ENCODE measurements at regions of chr22 and their contacts with region 1.

Region 1: GRCh38 chr22:19970479-19971275 is 29.1 kb upstream of the TXNRD2 start:
- DNase-seq: peak; percentile 96 to 99 (median 98)
- ATAC-seq: peak; percentile 78
- H3K4me3 ChIP-seq: no peak overlapping the region
- H3K27ac ChIP-seq: no peak overlapping the region
- H3K4me1 ChIP-seq: peaks cover 18 to 79% of the 10 kb centered on the region in 2 experiments
- H3K27me3 ChIP-seq: no peaks in the 10 kb centered on the region
- CTCF ChIP-seq: peak; percentile 98 to 100 (median 99)
- EP300 ChIP-seq: peak; percentile 28; the same call in 1 of the 2 replicates
- POLR2A ChIP-seq: peak; percentile 59
- RAD21 ChIP-seq: peak; percentile 100

Region 2: GRCh38 chr22:19854778-19855503 is 115.7 kb before region 1 on chr22 and contains the starts of genes GNB1L and RTL10:
- CTCF ChIA-PET with region 1: no interaction called
- POLR2A ChIA-PET with region 1: no interaction called
- in situ Hi-C with region 1: no loop called
- intact Hi-C with region 1: no loop called
- DNase-seq: peak; percentile 100
- ATAC-seq: peak; percentile 92
- H3K4me3 ChIP-seq: peak within 1 kb of the TSS; percentile 62
- H3K27ac ChIP-seq: peak within 1 kb of the TSS; percentile 84
- H3K4me1 ChIP-seq: peaks cover 23 to 63% of the 10 kb centered on the region in 2 experiments
- H3K27me3 ChIP-seq: no peaks in the 10 kb centered on the region
- CTCF ChIP-seq: peak; percentile 29 to 50 (median 49); a peak in 5 of 6 replicates
- EP300 ChIP-seq: peak; percentile 57
- POLR2A ChIP-seq: no peak
- RAD21 ChIP-seq: 0 out of 4 replicates have a peak, but pooled peaks of 1 of the 2 experiments have one; percentile 46
- polyA plus RNA-seq, gene GNB1L: 0.56 to 3.5 TPM
- polyA plus RNA-seq, gene RTL10: 23.6 to 33.7 TPM

Region 3: GRCh38 chr22:19986410-19987341 is 16.0 kb after region 1 on chr22:
- CTCF ChIA-PET with region 1: no interaction called
- POLR2A ChIA-PET with region 1: interaction called, 56 read pairs
- in situ Hi-C with region 1: no loop called
- intact Hi-C with region 1: no loop called
- DNase-seq: peak; percentile 97 to 100 (median 100)
- ATAC-seq: peak; percentile 94
- H3K4me3 ChIP-seq: peak overlapping the region; percentile 48
- H3K27ac ChIP-seq: peak overlapping the region; percentile 43; the same call in 1 of the 3 replicates
- H3K4me1 ChIP-seq: peaks cover 39 to 91% of the 10 kb centered on the region in 2 experiments
- H3K27me3 ChIP-seq: no peaks in the 10 kb centered on the region
- CTCF ChIP-seq: peak in 2 of 3 experiments; percentile 14 to 20; a peak in 1 of 6 replicates
- EP300 ChIP-seq: no peak
- POLR2A ChIP-seq: peak; percentile 56
- RAD21 ChIP-seq: no peak; a peak in 1 of 4 replicates

Region 4: GRCh38 chr22:20013382-20013871 is 42.8 kb after region 1 on chr22:
- CTCF ChIA-PET with region 1: interaction called, 109 read pairs
- POLR2A ChIA-PET with region 1: interaction called, 25 read pairs
- in situ Hi-C with region 1: loop called (anchors 5 kb)
- intact Hi-C with region 1: loop called (anchors 1 kb)
- DNase-seq: peak; percentile 87 to 90 (median 88)
- ATAC-seq: peak; percentile 56
- H3K4me3 ChIP-seq: no peak overlapping the region
- H3K27ac ChIP-seq: no peak overlapping the region
- H3K4me1 ChIP-seq: peaks cover 63 to 90% of the 10 kb centered on the region in 2 experiments
- H3K27me3 ChIP-seq: peaks cover 0 to 8% of the 10 kb centered on the region in 2 experiments; a peak in 1 of 5 replicates
- CTCF ChIP-seq: peak; percentile 98 to 100 (median 99)
- EP300 ChIP-seq: no peak
- POLR2A ChIP-seq: no peak
- RAD21 ChIP-seq: peak; percentile 99 to 100

Region 5: DNA sequence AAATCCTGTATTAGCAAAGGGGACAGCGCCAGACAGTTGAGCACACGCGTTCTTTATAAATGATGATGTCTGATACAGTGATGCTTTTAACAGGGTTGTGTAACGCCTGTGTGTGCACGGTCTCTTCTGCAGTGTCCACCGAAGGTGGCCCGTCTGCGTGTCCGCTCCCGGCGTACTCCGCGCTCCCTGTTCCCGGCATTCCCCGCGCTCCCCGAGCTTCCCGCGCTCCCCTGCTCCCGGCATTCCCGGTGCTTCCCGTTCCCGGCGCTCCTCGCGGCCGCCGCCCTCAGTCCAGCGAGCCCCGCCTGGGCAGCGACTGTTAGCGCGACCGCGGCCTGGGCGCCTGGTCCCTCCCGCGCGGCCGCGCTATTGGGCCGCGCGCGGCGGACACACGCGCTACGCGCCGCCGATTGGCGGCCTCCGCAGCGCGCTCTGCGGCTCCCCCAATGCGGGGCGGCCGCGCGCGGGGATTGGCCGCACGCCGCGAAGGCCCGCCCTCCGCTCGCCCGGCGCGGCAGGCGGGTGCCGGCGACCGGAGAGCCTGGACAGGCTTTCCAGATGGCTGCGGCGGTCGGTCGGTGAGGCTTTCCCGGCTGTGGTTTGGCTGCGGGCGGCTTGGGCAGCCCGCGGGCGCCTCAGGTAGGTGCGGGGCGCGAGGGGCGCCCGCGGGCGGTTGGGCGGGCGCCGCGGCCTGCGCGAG is 109.2 kb after region 1 on chr22 and contains the start of gene DGCR8:
- CTCF ChIA-PET with region 1: interaction called, 19 read pairs
- POLR2A ChIA-PET with region 1: interaction called, 4 read pairs
- in situ Hi-C with region 1: loop called (anchors 5 kb)
- intact Hi-C with region 1: loop called (anchors 1 kb)
- DNase-seq: peak; percentile 100
- ATAC-seq: peak; percentile 87
- H3K4me3 ChIP-seq: peak within 1 kb of the TSS; percentile 67
- H3K27ac ChIP-seq: peak within 1 kb of the TSS; percentile 78
- H3K4me1 ChIP-seq: peaks cover 46 to 67% of the 10 kb centered on the region in 2 experiments
- H3K27me3 ChIP-seq: no peaks in the 10 kb centered on the region
- CTCF ChIP-seq: peak in 2 of 3 experiments; percentile 8 to 9; a peak in 2 of 6 replicates
- EP300 ChIP-seq: peak; percentile 62
- POLR2A ChIP-seq: no peak
- RAD21 ChIP-seq: peak; percentile 30 to 34; a peak in 2 of 4 replicates
- polyA plus RNA-seq, gene DGCR8: 5.9 to 7.7 TPM

Region 6: DNA sequence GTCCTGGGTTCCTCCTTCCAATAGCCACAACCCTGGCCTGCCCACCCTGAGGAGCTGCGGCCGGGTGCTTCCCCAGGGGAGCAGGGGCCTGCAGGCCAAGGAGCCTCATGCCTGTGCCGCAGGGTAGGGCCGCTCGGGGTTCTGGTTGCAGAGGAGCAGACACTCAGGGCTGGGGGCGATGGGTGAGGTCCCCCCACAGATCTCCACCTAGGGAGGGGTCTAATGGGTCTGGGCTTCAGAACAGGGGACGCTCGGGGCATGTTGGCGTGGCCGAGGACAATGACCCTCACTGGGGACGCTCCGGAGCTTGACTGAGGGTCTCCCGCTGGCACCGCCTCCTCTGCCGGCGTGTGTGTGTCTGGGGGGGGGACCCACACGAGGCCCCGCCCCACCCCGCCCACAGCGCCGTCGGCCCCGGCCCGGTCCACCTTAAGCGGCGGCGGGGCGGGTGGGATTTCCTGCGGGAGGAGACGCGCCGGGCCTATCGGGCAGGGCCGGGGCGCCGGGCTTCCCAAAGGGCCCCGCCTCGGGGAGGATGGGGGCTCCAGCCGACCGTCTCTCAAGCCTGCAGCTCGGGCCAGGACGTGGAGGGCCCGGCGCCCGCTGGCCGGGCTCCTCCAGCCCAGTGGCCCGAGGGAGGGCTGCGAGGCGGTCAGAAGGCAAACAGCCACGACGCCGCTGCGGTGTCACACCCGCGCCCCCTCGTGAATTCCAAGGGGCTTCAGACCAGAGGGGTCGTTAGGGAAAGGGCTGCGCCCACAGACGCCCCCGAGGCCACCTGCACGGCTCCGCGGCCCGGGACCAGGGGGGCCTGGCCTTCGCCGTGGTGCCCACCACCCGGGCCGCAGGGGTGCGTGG is 160.3 kb after region 1 on chr22:
- CTCF ChIA-PET with region 1: interaction called, 80 read pairs
- POLR2A ChIA-PET with region 1: interaction called, 115 read pairs
- in situ Hi-C with region 1: loop called (anchors 5 kb)
- intact Hi-C with region 1: loop called (anchors 1 kb)
- DNase-seq: peak; percentile 95 to 100 (median 98)
- ATAC-seq: peak; percentile 79
- H3K4me3 ChIP-seq: peak overlapping the region; percentile 62
- H3K27ac ChIP-seq: peak overlapping the region; percentile 20; the same call in 2 of the 3 replicates
- H3K4me1 ChIP-seq: peaks cover 11 to 79% of the 10 kb centered on the region in 2 experiments
- H3K27me3 ChIP-seq: no peaks in the 10 kb centered on the region
- CTCF ChIP-seq: no peak
- EP300 ChIP-seq: no peak
- POLR2A ChIP-seq: no peak
- RAD21 ChIP-seq: no peak

Region 7: DNA sequence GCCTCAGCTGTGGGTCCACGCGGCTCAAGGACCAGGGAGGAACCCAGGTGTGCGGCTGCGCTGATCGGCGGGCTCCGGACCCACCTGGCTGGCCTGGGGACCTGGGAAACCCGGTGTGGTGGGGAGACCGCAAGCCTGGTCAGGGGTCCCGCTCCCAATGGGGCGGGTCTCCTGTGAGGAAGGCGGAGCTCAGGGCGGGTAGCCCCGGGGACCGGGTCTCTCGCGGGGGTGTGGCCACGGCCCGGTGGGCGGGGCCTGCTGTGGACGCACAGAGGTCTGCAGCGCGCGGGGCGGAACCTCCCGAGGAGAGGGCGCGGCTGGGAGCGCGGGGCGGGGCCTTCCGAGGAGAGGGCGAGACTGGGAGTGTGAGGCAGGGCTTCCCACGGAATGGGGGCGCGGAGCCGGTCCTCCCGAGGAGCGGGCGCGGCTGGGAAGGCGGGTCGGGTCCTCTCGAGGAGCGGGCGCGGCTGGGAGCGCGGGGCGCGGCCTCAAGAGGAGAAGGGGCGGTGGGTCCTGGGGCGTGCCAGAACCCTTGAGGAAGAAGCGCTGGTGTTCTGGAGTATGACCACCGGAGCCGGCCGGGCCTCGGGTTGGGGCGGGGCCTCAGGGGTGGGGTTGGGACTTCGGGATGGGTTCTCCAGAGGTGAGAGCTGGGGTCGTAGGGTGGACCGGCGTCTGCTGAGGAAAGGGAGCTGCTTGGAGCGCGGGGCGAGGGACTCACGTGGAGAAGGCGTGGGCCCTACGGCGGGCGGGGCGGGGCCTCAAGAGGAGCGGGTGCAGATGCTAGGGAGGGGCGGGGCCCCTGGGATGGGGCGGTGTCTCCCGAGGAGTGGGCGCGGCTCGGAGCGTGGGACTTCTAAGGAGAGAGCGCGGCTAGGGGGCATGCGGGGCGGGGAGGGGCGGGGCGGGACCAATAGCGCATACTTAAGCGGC is 328.4 kb after region 1 on chr22:
- CTCF ChIA-PET with region 1: no interaction called
- POLR2A ChIA-PET with region 1: no interaction called
- in situ Hi-C with region 1: no loop called
- intact Hi-C with region 1: loop called (anchors 10 kb)
- DNase-seq: peak; percentile 99 to 100 (median 100)
- ATAC-seq: peak; percentile 97
- H3K4me3 ChIP-seq: peak overlapping the region; percentile 55
- H3K27ac ChIP-seq: no peak overlapping the region
- H3K4me1 ChIP-seq: peaks cover 8 to 30% of the 10 kb centered on the region in 2 experiments
- H3K27me3 ChIP-seq: peaks cover 58 to 85% of the 10 kb centered on the region in 2 experiments
- CTCF ChIP-seq: peak in 1 of 3 experiments; percentile 9; a peak in 1 of 6 replicates
- EP300 ChIP-seq: no peak
- POLR2A ChIP-seq: no peak
- RAD21 ChIP-seq: no peak